Common myeloid progenitor, CD34-positive (primary cell): ENCODE measurements at regions of chr9 and their contacts with region 1.

Region 1: GRCh38 chr9:27436234-27436633 is 87.9 kb upstream of the IFNK start:
- DNase-seq: no peak
- H3K4me3 ChIP-seq: no peak overlapping the region
- H3K27ac ChIP-seq: no peak overlapping the region
- H3K4me1 ChIP-seq: peaks cover 5 to 23% (median 17%) of the 10 kb centered on the region in 4 experiments
- H3K27me3 ChIP-seq: no peaks in the 10 kb centered on the region

Region 2: DNA sequence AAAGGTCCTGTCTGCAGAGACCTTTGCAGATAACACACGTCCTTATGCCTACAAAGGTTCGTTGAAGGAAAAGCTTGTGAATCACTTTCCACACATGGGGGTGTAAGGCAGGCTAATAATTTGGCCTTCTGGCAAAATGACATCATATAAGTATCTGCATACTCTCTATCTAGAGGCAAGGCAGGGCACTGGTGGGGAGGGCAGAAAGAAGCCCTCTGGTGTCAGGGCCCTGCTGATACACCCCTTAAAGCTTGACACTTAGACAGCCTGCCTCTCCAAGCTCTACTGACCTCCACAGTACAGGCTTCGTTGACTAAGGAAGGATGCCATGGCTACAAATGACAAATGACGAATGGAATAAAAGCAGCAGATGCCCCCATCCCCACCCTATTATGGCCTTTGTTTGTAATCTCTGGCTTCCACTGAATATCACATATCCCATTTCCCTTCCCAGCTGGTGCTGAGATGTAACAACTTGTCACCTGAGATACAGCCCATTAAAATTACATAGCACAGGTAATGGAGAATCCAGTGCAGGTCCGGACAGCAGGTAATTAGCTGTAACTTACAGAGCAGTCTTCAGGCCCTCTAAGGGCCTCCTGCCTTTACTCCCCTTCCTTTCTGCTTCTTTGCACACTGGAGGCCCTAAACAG is 10.9 kb after region 1 on chr9:
- CTCF ChIA-PET with region 1: interaction called, 11 read pairs
- POLR2A ChIA-PET with region 1: no interaction called
- DNase-seq: no peak
- H3K4me3 ChIP-seq: no peak overlapping the region
- H3K27ac ChIP-seq: no peak overlapping the region
- H3K4me1 ChIP-seq: no peaks in the 10 kb centered on the region
- H3K27me3 ChIP-seq: no peaks in the 10 kb centered on the region